ENCODE measurements at regions of chr10 and their contacts with region 1.

Region 1: GRCh38 chr10:45557275-45557905 is 115.2 kb downstream of the ZFAND4 start:
- DNase-seq: peak; percentile 93
- H3K4me3 ChIP-seq: no peak overlapping the region
- H3K27ac ChIP-seq: peak overlapping the region; percentile 47
- H3K4me1 ChIP-seq: peaks cover 26% of the 10 kb centered on the region
- H3K27me3 ChIP-seq: no peaks in the 10 kb centered on the region
- CTCF ChIP-seq: no peak
- POLR2A ChIP-seq: no peak

Region 2: GRCh38 chr10:45235798-45236231 is 321.6 kb before region 1 on chr10:
- CTCF ChIA-PET with region 1: no interaction called
- POLR2A ChIA-PET with region 1: no interaction called
- dilution Hi-C with region 1: no loop called
- intact Hi-C with region 1: no loop called
- DNase-seq: peak; percentile 78
- H3K4me3 ChIP-seq: no peak overlapping the region
- H3K27ac ChIP-seq: peak overlapping the region; percentile 14
- H3K4me1 ChIP-seq: peaks cover 28% of the 10 kb centered on the region
- H3K27me3 ChIP-seq: no peaks in the 10 kb centered on the region
- CTCF ChIP-seq: no peak
- POLR2A ChIP-seq: no peak

Region 3: GRCh38 chr10:45581582-45582385 is 24.4 kb after region 1 on chr10:
- CTCF ChIA-PET with region 1: interaction called, 3 read pairs
- POLR2A ChIA-PET with region 1: no interaction called
- dilution Hi-C with region 1: no loop called
- intact Hi-C with region 1: loop called (anchors 2 kb)
- DNase-seq: no peak
- H3K4me3 ChIP-seq: no peak overlapping the region
- H3K27ac ChIP-seq: no peak overlapping the region
- H3K4me1 ChIP-seq: no peaks in the 10 kb centered on the region
- H3K27me3 ChIP-seq: no peaks in the 10 kb centered on the region
- CTCF ChIP-seq: no peak
- POLR2A ChIP-seq: no peak